Caco-2 (cell line): ENCODE measurements at regions of chr12 and their contacts with region 1.

Region 1: DNA sequence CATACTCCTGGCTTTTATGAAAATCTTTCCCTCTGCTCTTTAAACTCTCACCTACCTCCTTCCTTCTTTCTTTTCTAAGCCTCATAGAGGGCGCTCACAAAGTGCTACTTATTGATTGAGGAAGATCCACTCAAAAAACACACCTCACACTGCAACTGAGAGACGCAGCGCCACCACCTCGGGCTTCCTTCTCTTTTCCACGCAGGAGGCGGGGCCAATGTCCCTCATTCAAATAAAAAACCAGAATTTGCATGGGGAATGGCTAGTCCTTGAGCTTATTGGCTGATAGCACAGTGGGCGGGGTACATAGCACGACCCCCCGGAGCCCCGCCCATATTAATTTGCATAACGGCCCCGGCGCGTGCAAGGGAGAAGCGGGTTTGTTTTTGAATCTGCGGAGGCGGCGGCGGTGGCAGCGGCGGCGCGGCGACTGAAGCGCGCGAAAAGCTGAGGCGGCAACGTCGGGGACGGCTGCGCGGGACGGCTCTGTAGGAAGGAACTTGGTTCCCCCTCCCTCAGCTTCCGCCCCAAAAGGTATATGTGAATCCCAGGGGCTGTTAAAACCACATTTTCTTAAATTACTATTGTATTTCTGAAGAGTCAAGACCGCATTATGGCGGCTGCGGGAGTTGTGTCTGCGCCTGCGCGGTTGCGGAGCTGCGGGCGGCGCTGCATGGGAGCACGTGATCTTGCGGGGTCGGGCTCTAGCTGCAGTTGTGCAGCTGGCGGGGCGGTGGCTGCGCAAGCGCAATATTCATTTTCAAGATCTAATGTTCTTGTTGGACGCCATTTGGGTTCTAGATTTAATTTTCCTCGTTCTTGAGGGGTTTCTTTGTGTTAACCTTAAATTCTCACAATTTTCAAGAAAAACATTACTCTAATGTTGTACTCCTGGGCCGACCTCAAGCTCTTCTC is at the start of gene ATF7IP:
- DNase-seq: peak; percentile 99
- H3K4me3 ChIP-seq: peak within 1 kb of the TSS; percentile 76
- H3K4me3 Mint-ChIP-seq: peak within 1 kb of the TSS; percentile 73
- H3K27ac Mint-ChIP-seq: peak within 1 kb of the TSS; percentile 69
- H3K4me1 ChIP-seq: peaks cover 11% of the 10 kb centered on the region
- H3K4me1 Mint-ChIP-seq: peaks cover 22% of the 10 kb centered on the region
- H3K27me3 ChIP-seq: no peaks in the 10 kb centered on the region
- H3K27me3 Mint-ChIP-seq: no peaks in the 10 kb centered on the region
- CTCF ChIP-seq: peak in 1 of 2 experiments; percentile 49
- total RNA-seq, gene ATF7IP: 98.3 and 107 TPM in 2 replicates

Region 2: DNA sequence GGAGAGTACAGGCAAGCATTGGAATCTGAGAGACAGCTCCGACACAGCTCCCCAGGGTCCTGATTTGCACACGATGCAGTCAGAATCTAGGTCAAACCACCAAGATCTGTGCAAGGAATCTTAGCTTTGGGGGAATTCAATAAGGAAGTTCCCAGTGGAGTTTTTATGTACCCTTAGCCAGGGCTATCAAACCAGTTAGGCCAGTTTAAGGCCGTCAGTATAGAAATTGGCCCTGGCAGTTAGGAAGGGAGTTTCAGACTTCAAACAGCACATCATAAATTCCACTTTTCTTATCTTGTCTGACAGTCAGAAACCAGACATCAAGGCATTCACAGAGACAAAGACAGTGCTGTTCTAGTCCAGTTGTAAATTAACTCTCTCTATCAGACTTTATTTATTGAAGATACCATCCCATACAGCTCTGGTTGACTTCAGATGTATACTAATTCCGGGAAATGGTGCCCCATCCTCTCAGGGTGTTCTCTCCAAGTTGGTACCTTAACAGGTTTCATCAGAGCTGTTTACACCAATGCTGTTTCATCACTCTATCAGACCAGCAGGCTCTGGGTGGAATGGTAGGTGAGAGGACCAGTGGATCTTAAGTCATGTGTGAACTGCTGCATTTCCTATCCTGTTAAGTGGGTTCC is 157.5 kb before region 1 on chr12:
- CTCF ChIA-PET with region 1: interaction called, 3 read pairs
- POLR2A ChIA-PET with region 1: interaction called, 12 read pairs
- intact Hi-C with region 1: loop called (anchors 1 kb)
- DNase-seq: peak; percentile 92 to 94
- H3K4me3 ChIP-seq: no peak overlapping the region
- H3K4me3 Mint-ChIP-seq: peak overlapping the region; percentile 29
- H3K27ac Mint-ChIP-seq: peak overlapping the region; percentile 96
- H3K4me1 ChIP-seq: peaks cover 57% of the 10 kb centered on the region
- H3K4me1 Mint-ChIP-seq: peaks cover 55% of the 10 kb centered on the region
- H3K27me3 ChIP-seq: no peaks in the 10 kb centered on the region
- H3K27me3 Mint-ChIP-seq: no peaks in the 10 kb centered on the region
- CTCF ChIP-seq: no peak

Region 3: DNA sequence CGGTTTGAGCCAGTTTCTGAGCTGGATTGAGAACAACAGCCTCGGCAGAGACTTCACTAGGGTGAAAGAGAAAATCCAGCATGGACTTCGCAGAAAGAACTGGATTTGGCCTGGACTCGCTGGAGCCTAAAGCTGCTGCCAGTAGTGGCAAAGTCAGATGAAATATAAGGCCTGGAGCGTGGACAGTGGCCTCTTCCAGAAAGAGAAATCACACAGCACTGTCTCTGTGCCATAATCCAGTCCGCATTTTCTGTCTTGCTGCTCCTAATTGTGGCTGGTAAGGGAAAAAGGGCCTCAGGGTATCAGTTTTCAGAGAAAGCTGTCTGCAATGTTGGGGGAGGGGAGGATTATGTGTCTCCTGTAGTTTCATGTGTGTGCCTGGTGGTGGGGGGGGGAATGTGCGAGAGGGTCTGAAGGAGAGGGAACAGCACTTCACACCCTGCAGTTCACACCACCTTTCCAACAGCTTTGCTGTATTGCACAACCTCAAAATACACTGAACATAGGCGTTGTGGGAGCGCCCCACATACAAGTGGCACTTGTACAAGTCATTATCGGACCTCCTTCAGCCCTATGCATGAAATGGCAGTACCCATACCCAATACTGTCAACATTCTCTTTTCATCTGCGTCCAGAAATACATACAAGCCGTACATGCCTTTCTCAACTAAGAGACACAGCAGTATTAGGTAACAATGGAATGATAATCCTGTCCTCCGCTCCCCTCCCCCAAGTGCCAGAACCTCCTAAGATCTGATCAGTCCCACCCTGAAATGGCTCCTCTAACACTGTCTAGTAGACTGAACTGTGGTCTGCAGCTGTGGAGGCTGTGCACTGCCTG is 107.6 kb before region 1 on chr12:
- CTCF ChIA-PET with region 1: interaction called, 4 read pairs
- POLR2A ChIA-PET with region 1: no interaction called
- intact Hi-C with region 1: loop called (anchors 5 kb)
- DNase-seq: peak; percentile 70 to 87
- H3K4me3 ChIP-seq: no peak overlapping the region
- H3K4me3 Mint-ChIP-seq: peak overlapping the region; percentile 12
- H3K27ac Mint-ChIP-seq: peak overlapping the region; percentile 38
- H3K4me1 ChIP-seq: peaks cover 19% of the 10 kb centered on the region
- H3K4me1 Mint-ChIP-seq: peaks cover 12% of the 10 kb centered on the region
- H3K27me3 ChIP-seq: no peaks in the 10 kb centered on the region
- H3K27me3 Mint-ChIP-seq: no peaks in the 10 kb centered on the region
- CTCF ChIP-seq: no peak

Region 4: DNA sequence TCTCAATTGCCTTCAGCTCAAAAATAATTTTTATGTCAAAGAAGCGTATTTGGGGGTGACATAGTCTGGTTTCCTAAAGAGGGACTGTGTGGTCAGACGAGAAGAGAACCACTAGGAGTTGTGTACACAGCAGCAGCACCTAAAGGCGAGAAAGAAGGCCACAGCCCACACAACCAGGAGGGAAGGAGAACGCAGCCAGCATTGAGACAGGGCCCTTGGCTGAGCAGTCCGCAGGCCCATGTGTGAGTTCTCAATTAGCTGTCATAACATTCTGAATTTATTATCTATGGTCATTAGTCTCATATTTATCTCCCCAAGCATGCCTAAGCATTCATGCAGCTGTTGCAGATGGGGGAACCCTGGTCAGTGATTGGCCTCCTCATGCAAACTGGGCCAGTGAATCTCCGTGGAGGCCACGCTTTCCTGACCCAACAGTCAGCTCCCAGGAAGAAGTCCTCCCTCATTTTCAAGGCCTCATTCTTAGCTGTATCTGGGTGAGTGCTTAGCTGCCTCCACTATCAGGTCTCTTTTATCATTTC is 81.3 kb before region 1 on chr12:
- CTCF ChIA-PET with region 1: no interaction called
- POLR2A ChIA-PET with region 1: no interaction called
- intact Hi-C with region 1: no loop called
- DNase-seq: no peak
- H3K4me3 ChIP-seq: no peak overlapping the region
- H3K4me3 Mint-ChIP-seq: no peak overlapping the region
- H3K27ac Mint-ChIP-seq: no peak overlapping the region
- H3K4me1 ChIP-seq: no peaks in the 10 kb centered on the region; the same call in 1 of the 2 replicates
- H3K4me1 Mint-ChIP-seq: peaks cover 6% of the 10 kb centered on the region
- H3K27me3 ChIP-seq: no peaks in the 10 kb centered on the region
- H3K27me3 Mint-ChIP-seq: no peaks in the 10 kb centered on the region
- CTCF ChIP-seq: no peak

Region 5: DNA sequence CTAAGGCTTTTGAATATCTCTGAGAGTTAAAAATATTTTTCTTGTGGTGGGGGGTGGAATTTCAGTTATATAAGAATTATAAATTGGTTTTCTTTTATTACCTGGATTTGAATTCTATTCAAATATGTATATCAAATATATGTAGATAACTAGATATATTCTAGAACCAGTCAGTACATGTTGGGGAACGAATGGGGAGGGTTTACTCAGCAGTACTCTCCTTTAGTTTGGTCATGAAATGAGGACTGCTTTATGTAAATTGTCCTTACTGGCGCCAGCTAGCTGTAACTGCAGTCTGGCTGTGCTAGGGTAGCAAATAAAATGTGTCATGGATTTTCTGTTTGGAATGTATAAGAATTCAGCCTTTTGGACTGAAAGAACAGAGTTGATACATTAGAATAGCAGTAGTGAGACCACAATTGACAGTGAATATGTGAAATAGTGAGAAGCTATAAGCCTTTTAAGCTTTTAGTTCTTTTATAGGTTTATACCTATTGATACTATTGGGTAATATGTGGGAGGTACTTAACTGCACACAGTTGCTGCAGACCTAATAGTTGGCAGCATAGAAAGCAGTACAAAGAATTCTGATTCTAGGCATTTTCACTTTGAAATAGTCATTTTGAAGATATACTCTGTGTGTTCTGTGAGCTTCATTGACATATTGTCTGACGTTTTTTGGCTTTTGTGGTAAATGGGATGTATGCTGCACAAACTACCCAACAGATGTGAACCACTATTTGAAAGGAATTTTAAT is 28.9 kb after region 1 on chr12:
- CTCF ChIA-PET with region 1: interaction called, 3 read pairs
- POLR2A ChIA-PET with region 1: interaction called, 10 read pairs
- intact Hi-C with region 1: no loop called
- DNase-seq: peak; percentile 56 to 74
- H3K4me3 ChIP-seq: no peak overlapping the region
- H3K4me3 Mint-ChIP-seq: peak overlapping the region; percentile 9
- H3K27ac Mint-ChIP-seq: peak overlapping the region; percentile 28
- H3K4me1 ChIP-seq: peaks cover 13% of the 10 kb centered on the region
- H3K4me1 Mint-ChIP-seq: no peaks in the 10 kb centered on the region
- H3K27me3 ChIP-seq: no peaks in the 10 kb centered on the region
- H3K27me3 Mint-ChIP-seq: no peaks in the 10 kb centered on the region
- CTCF ChIP-seq: peak in 1 of 2 experiments; percentile 20

Region 6: GRCh38 chr12:14454098-14454907 is 88.8 kb after region 1 on chr12:
- CTCF ChIA-PET with region 1: interaction called, 18 read pairs
- POLR2A ChIA-PET with region 1: interaction called, 5 read pairs
- intact Hi-C with region 1: loop called (anchors 1 kb)
- DNase-seq: peak; percentile 71 to 75
- H3K4me3 ChIP-seq: no peak overlapping the region
- H3K4me3 Mint-ChIP-seq: no peak overlapping the region
- H3K27ac Mint-ChIP-seq: no peak overlapping the region
- H3K4me1 ChIP-seq: 0 out of 2 replicates have a peak, but pooled peaks cover 11% of the 10 kb centered on the region
- H3K4me1 Mint-ChIP-seq: peaks cover 13% of the 10 kb centered on the region
- H3K27me3 ChIP-seq: no peaks in the 10 kb centered on the region
- H3K27me3 Mint-ChIP-seq: no peaks in the 10 kb centered on the region
- CTCF ChIP-seq: peak; percentile 89 to 96